ENCODE measurements at regions of chrX and their contacts with region 1.

Region 1: GRCh38 chrX:71151920-71152319 is 7.3 kb downstream of the NLGN3 start:
- DNase-seq: no peak
- ATAC-seq: no peak
- H3K4me3 ChIP-seq: no peak overlapping the region
- H3K27ac ChIP-seq: no peak overlapping the region
- H3K4me1 ChIP-seq: peaks cover 9% of the 10 kb centered on the region; the same call in 1 of the 2 replicates
- H3K27me3 ChIP-seq: no peaks in the 10 kb centered on the region; a peak in 2 of 5 replicates
- CTCF ChIP-seq: no peak
- EP300 ChIP-seq: no peak
- POLR2A ChIP-seq: no peak
- RAD21 ChIP-seq: no peak

Region 2: DNA sequence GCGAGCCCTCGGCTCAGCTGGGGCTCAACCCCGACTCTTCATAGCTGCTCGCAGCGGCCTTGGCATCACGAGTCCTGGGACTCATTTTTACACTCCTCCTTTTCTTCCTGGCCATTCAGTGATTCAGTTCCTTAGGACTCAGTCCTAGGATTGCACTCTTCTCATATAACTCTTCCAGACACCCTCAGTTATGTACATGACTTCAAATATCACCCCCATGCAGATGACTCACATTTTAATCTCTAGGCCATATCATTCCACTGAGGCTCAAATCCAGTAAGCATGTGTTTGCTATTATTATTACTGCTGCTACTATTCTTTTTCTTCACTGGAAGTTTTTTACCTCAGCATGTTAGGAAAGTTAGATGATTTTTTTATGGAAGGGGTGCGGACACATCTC is 164.0 kb after region 1 on chrX:
- CTCF ChIA-PET with region 1: no interaction called
- POLR2A ChIA-PET with region 1: no interaction called
- in situ Hi-C with region 1: no loop called
- intact Hi-C with region 1: no loop called
- DNase-seq: no peak
- ATAC-seq: no peak
- H3K4me3 ChIP-seq: no peak overlapping the region
- H3K27ac ChIP-seq: no peak overlapping the region
- H3K4me1 ChIP-seq: no peaks in the 10 kb centered on the region
- H3K27me3 ChIP-seq: no peaks in the 10 kb centered on the region
- CTCF ChIP-seq: no peak
- EP300 ChIP-seq: no peak
- POLR2A ChIP-seq: no peak
- RAD21 ChIP-seq: no peak

Region 3: GRCh38 chrX:71533851-71534561 is 382.1 kb after region 1 on chrX:
- CTCF ChIA-PET with region 1: no interaction called
- POLR2A ChIA-PET with region 1: no interaction called
- in situ Hi-C with region 1: no loop called
- intact Hi-C with region 1: no loop called
- DNase-seq: peak; percentile 7
- ATAC-seq: peak; percentile 18
- H3K4me3 ChIP-seq: peak overlapping the region; percentile 71 to 83 (median 72)
- H3K27ac ChIP-seq: peak overlapping the region; percentile 82
- H3K4me1 ChIP-seq: peaks cover 37% of the 10 kb centered on the region
- H3K27me3 ChIP-seq: no peaks in the 10 kb centered on the region; a peak in 1 of 5 replicates
- CTCF ChIP-seq: no peak
- EP300 ChIP-seq: no peak
- POLR2A ChIP-seq: no peak
- RAD21 ChIP-seq: no peak

Region 4: GRCh38 chrX:71632923-71633672 is 481.2 kb after region 1 on chrX:
- CTCF ChIA-PET with region 1: no interaction called
- POLR2A ChIA-PET with region 1: no interaction called
- in situ Hi-C with region 1: no loop called
- intact Hi-C with region 1: loop called (anchors 5 kb)
- DNase-seq: no peak
- ATAC-seq: peak; percentile 41; the same call in 2 of the 3 replicates
- H3K4me3 ChIP-seq: no peak overlapping the region
- H3K27ac ChIP-seq: no peak overlapping the region
- H3K4me1 ChIP-seq: peaks cover 43% of the 10 kb centered on the region
- H3K27me3 ChIP-seq: no peaks in the 10 kb centered on the region
- CTCF ChIP-seq: no peak
- EP300 ChIP-seq: no peak
- POLR2A ChIP-seq: no peak
- RAD21 ChIP-seq: no peak

Measured in HepG2 (cell line).